Endothelial cell of umbilical vein (primary cell): ENCODE measurements at regions of chr2 and their contacts with region 1.

Region 1: GRCh38 chr2:215269397-215270119 is 42.3 kb upstream of the ATIC start:
- DNase-seq: peak; percentile 77
- H3K4me3 ChIP-seq: no peak overlapping the region
- H3K27ac ChIP-seq: no peak overlapping the region
- H3K4me1 ChIP-seq: no peaks in the 10 kb centered on the region
- H3K27me3 ChIP-seq: no peaks in the 10 kb centered on the region
- CTCF ChIP-seq: peak; percentile 73 to 75
- POLR2A ChIP-seq: no peak

Region 2: GRCh38 chr2:214960677-214961076 is 308.9 kb before region 1 on chr2:
- CTCF ChIA-PET with region 1: interaction called, 10 read pairs
- POLR2A ChIA-PET with region 1: no interaction called
- dilution Hi-C with region 1: no loop called
- intact Hi-C with region 1: loop called (anchors 2 kb)
- DNase-seq: no peak
- H3K4me3 ChIP-seq: no peak overlapping the region
- H3K27ac ChIP-seq: no peak overlapping the region
- H3K4me1 ChIP-seq: no peaks in the 10 kb centered on the region
- H3K27me3 ChIP-seq: no peaks in the 10 kb centered on the region
- CTCF ChIP-seq: no peak
- POLR2A ChIP-seq: no peak

Region 3: DNA sequence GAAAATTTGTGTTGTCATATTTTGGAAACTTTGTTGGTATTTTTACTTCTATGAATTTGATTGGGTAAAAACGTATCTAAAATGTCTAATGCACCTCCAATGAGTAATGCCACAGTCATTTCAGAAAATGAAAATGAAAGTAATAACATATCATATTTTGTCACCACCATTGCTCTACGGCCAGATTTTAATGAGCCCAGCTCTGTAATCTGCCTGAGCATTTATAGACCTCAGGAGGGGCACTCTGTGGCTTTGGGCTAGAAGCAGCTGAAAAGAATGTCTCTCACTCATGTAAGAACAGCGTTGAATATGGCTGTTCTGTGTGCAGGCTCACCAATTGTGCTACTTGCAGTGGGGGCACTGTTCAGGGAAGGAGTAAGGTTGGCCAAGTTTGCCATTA is 98.4 kb before region 1 on chr2:
- CTCF ChIA-PET with region 1: no interaction called
- POLR2A ChIA-PET with region 1: no interaction called
- dilution Hi-C with region 1: no loop called
- intact Hi-C with region 1: no loop called
- DNase-seq: no peak
- H3K4me3 ChIP-seq: peak overlapping the region in 1 of 3 experiments; percentile 27
- H3K27ac ChIP-seq: no peak overlapping the region
- H3K4me1 ChIP-seq: no peaks in the 10 kb centered on the region
- H3K27me3 ChIP-seq: no peaks in the 10 kb centered on the region
- CTCF ChIP-seq: no peak
- POLR2A ChIP-seq: no peak

Region 4: DNA sequence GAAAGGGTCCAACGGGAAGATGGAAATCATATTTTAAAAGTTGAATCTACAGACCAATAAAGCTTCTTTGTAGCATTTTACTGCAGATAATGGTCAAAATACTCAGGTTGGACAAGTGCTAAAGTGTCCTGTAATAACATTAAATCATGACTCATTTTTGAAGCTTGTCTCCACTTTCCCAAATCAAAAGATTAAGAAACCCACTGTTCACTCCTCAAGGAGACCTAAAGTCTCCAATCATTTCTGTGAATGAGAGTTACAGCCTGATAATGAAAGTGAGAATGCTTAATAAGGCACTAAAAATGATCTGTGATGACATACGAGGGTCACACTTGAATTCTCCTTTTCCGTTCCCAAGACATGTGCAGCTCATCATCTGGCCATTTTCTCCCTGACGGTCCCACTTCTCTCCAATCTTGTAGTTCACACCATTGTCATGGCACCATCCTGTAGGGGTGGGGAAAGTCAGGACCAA is 95.7 kb after region 1 on chr2:
- CTCF ChIA-PET with region 1: no interaction called
- POLR2A ChIA-PET with region 1: no interaction called
- dilution Hi-C with region 1: no loop called
- intact Hi-C with region 1: no loop called
- DNase-seq: no peak
- H3K4me3 ChIP-seq: no peak overlapping the region
- H3K27ac ChIP-seq: no peak overlapping the region
- H3K4me1 ChIP-seq: no peaks in the 10 kb centered on the region
- H3K27me3 ChIP-seq: no peaks in the 10 kb centered on the region
- CTCF ChIP-seq: no peak
- POLR2A ChIP-seq: no peak